ENCODE measurements at regions of chr2 and their contacts with region 1.

Region 1: DNA sequence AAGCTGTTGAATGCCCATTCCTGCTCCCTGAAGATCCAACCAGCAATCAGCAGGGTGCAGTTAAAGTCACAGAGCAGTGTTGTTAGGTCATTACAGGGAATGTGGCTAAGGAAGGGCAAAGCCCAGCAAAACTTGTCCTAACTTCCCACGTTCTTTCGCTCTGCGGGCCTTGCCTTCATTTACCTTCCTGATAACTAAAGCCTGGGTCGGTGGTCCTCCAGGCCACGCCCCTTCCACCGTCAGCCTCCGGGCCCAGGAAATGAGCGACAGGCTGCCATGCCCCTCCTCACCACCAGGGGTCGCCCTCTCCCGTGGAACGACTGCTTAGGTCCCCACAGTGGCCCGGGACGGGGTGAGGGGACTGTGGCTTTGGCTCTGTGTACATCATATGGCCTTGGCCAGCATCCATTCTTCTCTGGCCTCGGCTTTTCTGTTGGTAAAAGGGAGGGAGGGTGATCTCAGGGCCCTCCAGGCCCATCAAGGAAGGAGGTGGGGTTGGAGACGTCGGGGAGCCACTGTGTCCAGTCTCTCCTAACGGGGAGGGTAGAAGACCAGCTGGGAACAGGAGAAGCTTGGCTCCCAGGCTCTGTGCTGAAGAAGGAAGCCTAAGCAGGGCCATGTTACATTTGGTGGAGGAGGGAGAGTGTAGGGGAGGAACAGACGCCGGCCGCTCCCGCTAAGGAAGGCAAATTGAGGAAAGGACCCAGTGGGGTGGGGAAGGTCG is 2.2 kb downstream of the SH2D6 start:
- DNase-seq: peak; percentile 98
- H3K4me3 Mint-ChIP-seq: peak overlapping the region; percentile 62
- H3K27ac Mint-ChIP-seq: peak overlapping the region; percentile 88
- H3K4me1 Mint-ChIP-seq: peaks cover 28% of the 10 kb centered on the region
- H3K27me3 Mint-ChIP-seq: no peaks in the 10 kb centered on the region

Region 2: DNA sequence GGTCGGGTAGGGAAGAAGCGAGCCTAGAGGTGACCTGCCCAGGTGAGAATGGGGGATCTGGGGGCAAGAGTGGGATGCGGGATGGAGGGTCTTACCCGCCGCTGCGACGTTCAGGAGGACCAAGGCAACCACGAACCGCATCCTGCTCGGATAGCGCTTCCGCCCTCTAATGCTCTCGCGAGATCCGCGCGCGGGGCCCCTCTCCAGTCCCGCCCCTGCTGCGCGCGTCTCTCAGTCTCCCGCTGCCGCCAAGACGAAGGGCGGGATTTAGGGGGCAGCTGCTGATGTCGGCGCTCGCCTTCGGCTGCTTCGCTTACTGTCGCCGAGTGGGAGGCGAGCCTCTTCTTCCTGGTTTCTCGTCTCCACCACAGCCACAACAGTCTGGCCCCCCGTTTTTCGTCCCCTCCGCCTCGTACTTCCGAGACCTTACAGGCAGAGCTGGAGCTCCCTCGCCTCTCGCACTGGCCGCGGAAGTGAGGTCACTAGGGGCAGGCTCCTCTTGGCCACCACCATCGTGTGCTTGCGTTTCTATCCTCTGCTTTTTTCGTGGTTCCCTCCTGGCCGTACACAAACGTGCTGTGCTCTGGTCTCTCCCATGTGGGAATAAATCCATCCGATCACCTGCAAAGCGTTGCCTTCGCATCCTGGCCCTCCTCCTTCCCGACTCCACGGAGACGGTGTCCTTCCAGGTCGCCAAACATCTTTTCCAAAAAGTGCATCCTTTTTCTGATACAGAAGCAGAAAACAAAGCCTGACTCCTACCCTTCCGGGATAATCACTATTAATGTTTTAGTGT is 92.7 kb before region 1 on chr2 and contains the start of gene TGOLN2:
- intact Hi-C with region 1: loop called (anchors 1 kb)
- DNase-seq: peak; percentile 98
- H3K4me3 Mint-ChIP-seq: peak within 1 kb of the TSS; percentile 95
- H3K27ac Mint-ChIP-seq: peak within 1 kb of the TSS; percentile 99
- H3K4me1 Mint-ChIP-seq: peaks cover 31% of the 10 kb centered on the region
- H3K27me3 Mint-ChIP-seq: no peaks in the 10 kb centered on the region
- total RNA-seq, gene TGOLN2: 89.6 and 94.1 TPM in 2 replicates

Region 3: DNA sequence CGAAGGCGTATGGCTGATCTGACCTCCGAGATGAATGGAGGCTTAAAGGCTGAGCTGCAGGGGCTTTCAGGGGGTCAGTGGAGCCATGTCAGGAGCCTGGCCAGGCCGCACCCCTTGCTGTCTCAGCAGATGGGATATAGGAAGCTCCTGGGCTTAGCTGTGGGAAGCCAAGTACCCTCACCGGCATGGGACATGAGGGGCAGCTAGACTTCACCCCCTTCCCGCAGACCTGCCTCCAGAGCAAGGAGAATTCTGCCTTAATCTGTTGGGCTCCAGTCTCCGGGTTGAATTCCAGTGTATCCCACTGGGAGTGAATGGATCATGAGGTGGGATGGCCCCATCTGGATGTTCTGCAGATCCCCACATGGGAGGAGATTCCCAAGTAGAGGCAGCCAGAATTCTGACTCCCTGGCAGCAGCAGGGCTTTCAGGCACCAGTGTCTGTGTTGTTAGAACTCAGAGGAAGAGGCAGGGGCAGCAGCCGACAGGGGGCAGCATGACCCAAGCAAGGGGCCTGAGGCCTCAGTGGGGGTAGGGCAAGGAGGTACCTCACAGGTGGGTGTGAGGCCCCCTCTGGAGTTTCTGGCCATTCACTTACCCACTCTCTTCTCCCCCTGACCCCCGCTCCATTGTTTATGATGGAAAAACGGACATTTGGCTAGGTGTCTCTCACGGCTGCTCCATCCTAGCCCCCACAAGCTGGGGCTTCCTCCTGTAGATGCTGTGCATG is 29.6 kb before region 1 on chr2:
- intact Hi-C with region 1: loop called (anchors 2 kb)
- DNase-seq: peak; percentile 93
- H3K4me3 Mint-ChIP-seq: no peak overlapping the region
- H3K27ac Mint-ChIP-seq: no peak overlapping the region
- H3K4me1 Mint-ChIP-seq: peaks cover 16% of the 10 kb centered on the region
- H3K27me3 Mint-ChIP-seq: no peaks in the 10 kb centered on the region

Region 4: GRCh38 chr2:85437488-85438284 is 17.0 kb after region 1 on chr2:
- intact Hi-C with region 1: loop called (anchors 1 kb)
- DNase-seq: peak; percentile 91
- H3K4me3 Mint-ChIP-seq: peak overlapping the region; percentile 91
- H3K27ac Mint-ChIP-seq: peak overlapping the region; percentile 97
- H3K4me1 Mint-ChIP-seq: peaks cover 30% of the 10 kb centered on the region
- H3K27me3 Mint-ChIP-seq: no peaks in the 10 kb centered on the region

Region 5: GRCh38 chr2:85455552-85456090 is 34.9 kb after region 1 on chr2:
- intact Hi-C with region 1: no loop called
- DNase-seq: no peak
- H3K4me3 Mint-ChIP-seq: no peak overlapping the region
- H3K27ac Mint-ChIP-seq: no peak overlapping the region
- H3K4me1 Mint-ChIP-seq: no peaks in the 10 kb centered on the region
- H3K27me3 Mint-ChIP-seq: no peaks in the 10 kb centered on the region

Region 6: DNA sequence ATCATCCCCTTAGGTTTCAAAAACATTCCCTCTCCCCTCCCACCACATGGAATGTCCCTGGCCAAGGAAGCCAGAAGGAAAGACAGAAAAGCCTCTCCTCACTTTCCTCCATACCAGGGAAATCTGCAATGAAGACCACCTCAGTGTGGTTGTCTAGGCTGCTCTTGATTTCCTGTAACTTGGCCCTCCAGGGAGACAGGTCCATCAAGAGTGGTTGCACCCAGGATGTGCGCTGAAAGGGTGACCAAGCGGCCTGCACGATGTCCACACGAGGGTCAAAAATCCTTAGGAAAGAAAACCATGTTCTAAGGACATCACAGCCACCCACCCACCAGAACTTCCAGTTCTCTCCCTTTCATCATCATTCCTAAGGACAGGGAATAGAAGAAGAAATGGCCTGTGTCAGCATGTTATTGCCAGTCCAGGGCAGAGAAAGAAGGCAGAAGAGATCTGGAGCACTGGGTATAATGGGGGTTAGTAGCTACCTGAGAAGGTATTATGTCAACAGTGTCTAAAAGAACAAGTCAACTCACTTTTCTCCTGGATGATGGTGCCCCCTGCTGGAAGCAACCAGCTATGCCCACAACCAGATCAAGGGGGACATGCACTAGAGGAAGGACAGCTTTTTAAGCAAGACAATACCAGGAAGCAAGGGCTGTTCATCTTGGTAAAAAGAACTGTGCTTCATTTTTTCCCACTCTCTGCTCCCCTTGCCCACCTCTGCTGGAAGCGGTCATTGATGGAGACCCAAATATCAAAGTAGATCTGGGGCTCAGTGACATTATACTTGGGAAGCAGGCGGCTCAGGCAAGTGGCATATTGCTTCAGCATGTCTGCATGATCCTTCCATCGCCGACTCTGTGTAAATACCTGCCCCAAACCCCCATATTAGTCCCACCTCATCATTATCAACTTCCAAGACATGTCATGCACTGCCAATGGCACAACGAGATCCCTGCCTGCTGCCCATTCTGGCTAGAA is 131.3 kb after region 1 on chr2:
- intact Hi-C with region 1: loop called (anchors 1 kb)
- DNase-seq: peak; percentile 96
- H3K4me3 Mint-ChIP-seq: no peak overlapping the region
- H3K27ac Mint-ChIP-seq: no peak overlapping the region
- H3K4me1 Mint-ChIP-seq: peaks cover 5% of the 10 kb centered on the region
- H3K27me3 Mint-ChIP-seq: no peaks in the 10 kb centered on the region

Region 7: GRCh38 chr2:85611705-85612587 is 191.2 kb after region 1 on chr2 and contains the start of gene C2orf68:
- intact Hi-C with region 1: loop called (anchors 1 kb)
- DNase-seq: peak; percentile 97
- H3K4me3 Mint-ChIP-seq: peak within 1 kb of the TSS; percentile 92
- H3K27ac Mint-ChIP-seq: peak within 1 kb of the TSS; percentile 91
- H3K4me1 Mint-ChIP-seq: peaks cover 13% of the 10 kb centered on the region
- H3K27me3 Mint-ChIP-seq: no peaks in the 10 kb centered on the region
- total RNA-seq, gene C2orf68: 36.6 and 36.9 TPM in 2 replicates

Region 8: GRCh38 chr2:85678794-85679672 is 258.3 kb after region 1 on chr2:
- intact Hi-C with region 1: no loop called
- DNase-seq: peak; percentile 95
- H3K4me3 Mint-ChIP-seq: peak overlapping the region; percentile 18
- H3K27ac Mint-ChIP-seq: no peak overlapping the region
- H3K4me1 Mint-ChIP-seq: peaks cover 24% of the 10 kb centered on the region
- H3K27me3 Mint-ChIP-seq: no peaks in the 10 kb centered on the region

Measured in activated CD4-positive, alpha-beta T cell treated with anti-CD3 and anti-CD28 coated beads, Interleukin-2, amount 10 ng/mL, durations not matched to agents 24 days and 14 days (primary cell).